Caco-2 (cell line): ENCODE measurements at regions of chr6 and their contacts with region 1.

Region 1: DNA sequence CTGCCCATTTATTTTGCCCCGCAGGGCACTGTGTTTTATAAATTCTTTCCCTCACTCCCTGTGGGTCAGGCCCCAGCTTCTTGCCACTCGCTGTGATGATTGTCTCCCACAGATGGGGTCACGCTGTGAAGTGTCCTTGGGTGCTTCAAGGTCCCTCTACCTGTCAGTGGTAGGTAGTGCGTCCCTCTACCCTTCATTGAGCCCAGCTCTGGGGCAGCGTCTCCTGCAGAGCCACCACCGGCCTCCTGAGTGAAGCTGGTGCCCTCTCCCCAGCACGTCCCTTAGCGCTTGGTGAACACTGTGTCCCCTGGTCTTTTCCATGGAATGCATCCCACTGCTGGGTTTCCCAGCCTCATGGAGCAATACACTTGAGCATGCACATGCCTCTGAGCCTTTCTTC is 108.2 kb downstream of the NRN1 start:
- DNase-seq: no peak
- H3K4me3 ChIP-seq: no peak overlapping the region
- H3K4me3 Mint-ChIP-seq: no peak overlapping the region
- H3K27ac Mint-ChIP-seq: no peak overlapping the region
- H3K4me1 ChIP-seq: no peaks in the 10 kb centered on the region
- H3K4me1 Mint-ChIP-seq: no peaks in the 10 kb centered on the region
- H3K27me3 ChIP-seq: no peaks in the 10 kb centered on the region
- H3K27me3 Mint-ChIP-seq: peaks cover 9% of the 10 kb centered on the region
- CTCF ChIP-seq: peak in 1 of 2 experiments; percentile 24

Region 2: GRCh38 chr6:5190507-5190906 is 708.1 kb before region 1 on chr6:
- CTCF ChIA-PET with region 1: no interaction called
- POLR2A ChIA-PET with region 1: no interaction called
- intact Hi-C with region 1: no loop called
- DNase-seq: peak; percentile 44 to 64
- H3K4me3 ChIP-seq: no peak overlapping the region
- H3K4me3 Mint-ChIP-seq: no peak overlapping the region
- H3K27ac Mint-ChIP-seq: peak overlapping the region; percentile 89
- H3K4me1 ChIP-seq: peaks cover 17% of the 10 kb centered on the region
- H3K4me1 Mint-ChIP-seq: peaks cover 9% of the 10 kb centered on the region
- H3K27me3 ChIP-seq: no peaks in the 10 kb centered on the region
- H3K27me3 Mint-ChIP-seq: no peaks in the 10 kb centered on the region
- CTCF ChIP-seq: no peak

Region 3: GRCh38 chr6:5471044-5471443 is 427.5 kb before region 1 on chr6:
- CTCF ChIA-PET with region 1: interaction called, 5 read pairs
- POLR2A ChIA-PET with region 1: no interaction called
- intact Hi-C with region 1: loop called (anchors 5 kb)
- DNase-seq: peak in 1 of 2 experiments; percentile 50
- H3K4me3 ChIP-seq: no peak overlapping the region
- H3K4me3 Mint-ChIP-seq: no peak overlapping the region
- H3K27ac Mint-ChIP-seq: no peak overlapping the region
- H3K4me1 ChIP-seq: no peaks in the 10 kb centered on the region
- H3K4me1 Mint-ChIP-seq: no peaks in the 10 kb centered on the region
- H3K27me3 ChIP-seq: no peaks in the 10 kb centered on the region
- H3K27me3 Mint-ChIP-seq: no peaks in the 10 kb centered on the region
- CTCF ChIP-seq: peak; percentile 60 to 88

Region 4: DNA sequence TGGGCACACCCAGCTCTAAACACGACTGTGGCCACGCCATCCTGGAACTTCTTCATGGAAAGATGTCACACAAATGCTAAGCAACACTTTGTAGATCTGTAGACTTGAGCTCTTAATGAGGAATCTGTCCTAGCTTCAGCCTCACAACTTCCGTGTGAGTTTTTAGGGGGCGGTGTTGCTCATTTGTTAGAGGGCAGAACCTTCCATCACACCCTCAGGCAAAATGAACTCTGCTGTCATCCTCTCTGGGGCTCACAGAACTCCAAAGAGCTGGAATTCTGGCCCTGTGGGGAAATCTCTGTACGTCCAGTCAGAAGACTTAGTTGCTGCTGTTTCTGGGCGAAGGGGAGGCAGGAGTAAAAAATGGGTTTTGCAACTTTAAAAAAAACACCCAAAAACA is 58.4 kb after region 1 on chr6:
- CTCF ChIA-PET with region 1: no interaction called
- POLR2A ChIA-PET with region 1: no interaction called
- intact Hi-C with region 1: no loop called
- DNase-seq: no peak
- H3K4me3 ChIP-seq: no peak overlapping the region
- H3K4me3 Mint-ChIP-seq: no peak overlapping the region
- H3K27ac Mint-ChIP-seq: no peak overlapping the region
- H3K4me1 ChIP-seq: no peaks in the 10 kb centered on the region
- H3K4me1 Mint-ChIP-seq: no peaks in the 10 kb centered on the region
- H3K27me3 ChIP-seq: no peaks in the 10 kb centered on the region
- H3K27me3 Mint-ChIP-seq: peaks cover 13% of the 10 kb centered on the region
- CTCF ChIP-seq: no peak

Region 5: GRCh38 chr6:6277413-6277812 is 378.9 kb after region 1 on chr6:
- CTCF ChIA-PET with region 1: no interaction called
- POLR2A ChIA-PET with region 1: no interaction called
- intact Hi-C with region 1: no loop called
- DNase-seq: peak in 1 of 2 experiments; percentile 2
- H3K4me3 ChIP-seq: no peak overlapping the region
- H3K4me3 Mint-ChIP-seq: no peak overlapping the region
- H3K27ac Mint-ChIP-seq: no peak overlapping the region
- H3K4me1 ChIP-seq: no peaks in the 10 kb centered on the region
- H3K4me1 Mint-ChIP-seq: no peaks in the 10 kb centered on the region
- H3K27me3 ChIP-seq: no peaks in the 10 kb centered on the region
- H3K27me3 Mint-ChIP-seq: peaks cover 17% of the 10 kb centered on the region
- CTCF ChIP-seq: no peak